ENCODE measurements at regions of chr1 and their contacts with region 1.

Region 1: DNA sequence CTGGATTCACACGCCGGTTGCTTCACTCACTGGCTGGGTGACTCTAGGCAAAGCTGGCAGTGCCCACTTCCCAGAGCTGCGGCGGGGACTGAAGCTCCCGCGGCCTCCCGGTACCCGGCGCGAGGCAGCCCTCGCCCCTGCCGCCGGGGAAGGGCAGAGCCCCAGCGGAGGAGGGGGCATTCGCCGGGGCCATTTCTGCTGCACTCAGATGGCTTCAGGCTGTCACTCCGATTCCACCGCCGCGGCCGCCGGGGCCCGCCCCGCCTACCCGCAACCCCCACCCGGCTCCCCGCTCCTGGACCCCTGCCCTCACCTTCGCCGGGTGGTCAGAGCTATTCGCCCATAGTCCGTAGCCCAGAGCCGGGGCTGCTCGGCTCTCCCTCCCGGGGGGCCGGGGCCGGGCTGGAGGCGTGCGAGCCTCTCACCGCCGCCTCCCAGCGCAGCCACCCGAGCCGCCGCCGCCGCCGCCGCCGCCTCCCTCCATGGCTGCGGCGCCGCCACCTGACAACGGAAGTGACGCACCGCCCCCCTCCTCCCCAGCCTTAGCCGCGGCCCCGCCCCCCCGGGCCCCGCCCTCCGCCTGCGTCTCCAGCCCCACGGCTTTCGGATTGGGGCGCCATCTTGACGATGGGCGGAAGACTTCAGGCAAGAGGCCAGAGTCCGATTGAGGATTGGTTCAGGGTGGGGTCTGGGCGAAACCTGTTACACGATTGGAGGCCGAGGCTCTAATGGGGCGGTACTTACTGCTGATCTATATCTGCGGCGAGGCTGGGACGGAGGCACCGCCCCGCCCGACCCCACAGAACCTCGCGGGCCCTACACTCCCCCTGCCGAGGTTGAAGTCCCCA is at the start of gene STK40:
- DNase-seq: peak; percentile 95
- H3K4me3 Mint-ChIP-seq: peak within 1 kb of the TSS; percentile 96
- H3K27ac Mint-ChIP-seq: peak within 1 kb of the TSS; percentile 97
- H3K4me1 Mint-ChIP-seq: peaks cover 54% of the 10 kb centered on the region
- H3K27me3 Mint-ChIP-seq: no peaks in the 10 kb centered on the region
- total RNA-seq, gene STK40: 46.5 and 48.7 TPM in 2 replicates

Region 2: DNA sequence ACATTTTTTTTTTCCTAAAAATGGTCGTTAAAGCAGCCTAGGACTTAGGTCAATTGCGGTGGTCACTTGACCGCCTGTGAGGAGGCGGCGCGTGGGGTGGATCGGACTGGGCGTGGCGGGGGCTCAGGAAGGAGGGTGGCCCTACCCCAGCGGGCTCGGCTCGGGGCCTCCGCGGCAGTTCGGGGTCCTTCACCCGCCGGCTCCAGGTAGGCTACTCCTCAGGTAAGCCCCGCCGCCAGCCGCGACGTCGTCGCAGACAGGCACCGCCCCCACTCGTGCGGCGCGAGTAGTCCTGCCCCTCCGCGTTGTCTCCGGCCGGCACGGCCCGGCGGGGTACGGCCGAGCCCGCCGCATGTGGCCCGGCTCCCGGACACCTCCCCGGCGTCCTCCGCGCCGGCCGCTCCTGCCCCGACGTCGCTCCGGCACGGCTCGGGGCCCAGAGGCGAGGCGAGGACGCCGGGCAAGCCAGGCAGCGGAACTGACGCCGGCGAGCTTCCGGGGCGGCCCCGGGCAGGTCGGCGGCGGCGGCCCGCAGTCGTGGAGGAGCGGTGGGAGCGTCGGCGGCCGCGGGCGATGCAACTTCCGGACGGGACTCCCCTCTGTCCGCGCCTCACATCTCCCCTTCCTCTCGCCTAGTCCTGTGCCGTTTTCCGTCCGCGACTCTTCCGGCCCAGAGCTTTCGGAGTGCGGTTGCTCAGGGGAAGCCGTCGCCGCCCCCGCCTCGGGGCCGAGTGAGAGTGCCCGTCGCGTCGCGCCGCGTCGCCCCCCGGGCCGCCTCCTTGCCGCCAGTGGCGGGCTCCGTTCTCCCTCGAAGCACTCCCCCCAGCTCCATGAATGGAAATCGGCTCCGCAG is 454.8 kb before region 1 on chr1 and contains the start of gene AGO3:
- intact Hi-C with region 1: loop called (anchors 10 kb)
- DNase-seq: peak; percentile 87
- H3K4me3 Mint-ChIP-seq: peak within 1 kb of the TSS; percentile 93
- H3K27ac Mint-ChIP-seq: peak within 1 kb of the TSS; percentile 97
- H3K4me1 Mint-ChIP-seq: peaks cover 36% of the 10 kb centered on the region
- H3K27me3 Mint-ChIP-seq: no peaks in the 10 kb centered on the region
- total RNA-seq, gene AGO3: 26.1 and 33.6 TPM in 2 replicates

Region 3: DNA sequence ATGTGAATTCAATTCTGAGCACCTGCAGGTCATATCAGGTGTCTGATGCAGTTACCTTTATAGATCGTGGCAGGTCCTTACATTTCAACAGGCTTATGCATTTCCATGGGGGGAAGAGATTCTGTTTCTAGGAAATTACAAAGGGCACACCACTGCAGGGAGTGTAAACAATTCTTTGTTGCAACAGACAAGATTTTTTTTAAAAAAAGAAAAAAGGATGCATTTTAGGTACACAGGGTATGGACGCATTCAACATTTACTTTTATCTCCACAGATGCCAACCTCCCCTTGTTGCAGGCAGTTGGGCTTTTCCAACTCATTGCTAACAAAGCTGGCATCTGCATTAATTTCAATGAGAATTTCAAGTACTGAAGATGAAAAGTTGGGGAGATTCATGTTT is 315.3 kb before region 1 on chr1:
- intact Hi-C with region 1: no loop called
- DNase-seq: no peak
- H3K4me3 Mint-ChIP-seq: no peak overlapping the region
- H3K27ac Mint-ChIP-seq: no peak overlapping the region
- H3K4me1 Mint-ChIP-seq: no peaks in the 10 kb centered on the region
- H3K27me3 Mint-ChIP-seq: no peaks in the 10 kb centered on the region

Region 4: GRCh38 chr1:36223993-36224536 is 161.6 kb before region 1 on chr1 and contains the start of gene THRAP3:
- intact Hi-C with region 1: loop called (anchors 1 kb)
- DNase-seq: peak; percentile 100
- H3K4me3 Mint-ChIP-seq: peak within 1 kb of the TSS; percentile 95
- H3K27ac Mint-ChIP-seq: peak within 1 kb of the TSS; percentile 100
- H3K4me1 Mint-ChIP-seq: peaks cover 36% of the 10 kb centered on the region
- H3K27me3 Mint-ChIP-seq: peaks cover 2% of the 10 kb centered on the region
- total RNA-seq, gene THRAP3: 147 and 154 TPM in 2 replicates

Region 5: DNA sequence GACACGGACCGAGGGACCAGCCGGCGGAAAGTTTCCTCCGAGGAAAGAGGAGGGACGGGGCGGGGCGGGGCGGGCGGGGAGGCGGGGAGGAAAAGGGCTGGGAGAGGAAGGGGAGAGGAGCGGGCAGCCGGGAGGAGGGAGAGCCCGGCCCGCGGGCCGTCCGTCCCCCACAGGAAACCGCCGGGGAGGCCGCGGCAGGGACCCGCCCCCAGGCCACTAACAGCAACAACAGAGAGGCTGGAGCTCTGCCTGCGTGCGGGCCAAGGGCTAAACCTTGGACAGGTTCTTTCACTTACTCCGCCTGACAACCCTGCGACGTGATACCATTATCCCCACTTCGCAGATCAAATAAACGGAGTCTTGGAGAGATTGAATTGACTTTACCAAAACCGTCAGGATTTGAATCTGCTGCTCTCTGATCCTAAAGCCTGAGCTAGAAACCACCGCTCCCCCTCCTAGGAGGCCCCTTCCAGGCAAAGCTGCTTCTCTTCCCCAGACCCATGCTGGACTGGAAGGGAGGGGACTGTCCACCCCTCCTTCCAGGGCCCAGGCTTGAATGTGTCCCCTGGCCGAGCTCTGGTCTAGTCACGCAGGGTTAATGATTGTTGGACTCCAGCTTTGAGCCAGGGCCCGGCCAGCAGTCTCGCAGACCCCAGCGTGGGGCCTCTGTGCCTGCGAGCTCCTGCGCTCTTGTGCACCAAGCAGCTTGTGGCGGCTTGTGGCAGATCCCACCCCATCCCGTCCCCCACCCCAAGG is 61.9 kb before region 1 on chr1 and contains the start of gene EVA1B:
- intact Hi-C with region 1: loop called (anchors 5 kb)
- DNase-seq: peak; percentile 60
- H3K4me3 Mint-ChIP-seq: peak within 1 kb of the TSS; percentile 80
- H3K27ac Mint-ChIP-seq: peak within 1 kb of the TSS; percentile 64
- H3K4me1 Mint-ChIP-seq: peaks cover 31% of the 10 kb centered on the region
- H3K27me3 Mint-ChIP-seq: peaks cover 6% of the 10 kb centered on the region
- total RNA-seq, gene EVA1B: 10.6 and 10.9 TPM in 2 replicates

Region 6: GRCh38 chr1:36397378-36398230 is 12.0 kb after region 1 on chr1 and contains the start of gene LSM10:
- intact Hi-C with region 1: loop called (anchors 1 kb)
- DNase-seq: peak; percentile 88
- H3K4me3 Mint-ChIP-seq: peak within 1 kb of the TSS; percentile 97
- H3K27ac Mint-ChIP-seq: peak within 1 kb of the TSS; percentile 98
- H3K4me1 Mint-ChIP-seq: peaks cover 29% of the 10 kb centered on the region
- H3K27me3 Mint-ChIP-seq: no peaks in the 10 kb centered on the region
- total RNA-seq, gene LSM10: 57.5 and 63.8 TPM in 2 replicates

Region 7: GRCh38 chr1:36420836-36421664 is 35.4 kb after region 1 on chr1:
- intact Hi-C with region 1: loop called (anchors 1 kb)
- DNase-seq: peak; percentile 81
- H3K4me3 Mint-ChIP-seq: no peak overlapping the region
- H3K27ac Mint-ChIP-seq: peak overlapping the region; percentile 48
- H3K4me1 Mint-ChIP-seq: peaks cover 14% of the 10 kb centered on the region
- H3K27me3 Mint-ChIP-seq: peaks cover 2% of the 10 kb centered on the region

Region 8: DNA sequence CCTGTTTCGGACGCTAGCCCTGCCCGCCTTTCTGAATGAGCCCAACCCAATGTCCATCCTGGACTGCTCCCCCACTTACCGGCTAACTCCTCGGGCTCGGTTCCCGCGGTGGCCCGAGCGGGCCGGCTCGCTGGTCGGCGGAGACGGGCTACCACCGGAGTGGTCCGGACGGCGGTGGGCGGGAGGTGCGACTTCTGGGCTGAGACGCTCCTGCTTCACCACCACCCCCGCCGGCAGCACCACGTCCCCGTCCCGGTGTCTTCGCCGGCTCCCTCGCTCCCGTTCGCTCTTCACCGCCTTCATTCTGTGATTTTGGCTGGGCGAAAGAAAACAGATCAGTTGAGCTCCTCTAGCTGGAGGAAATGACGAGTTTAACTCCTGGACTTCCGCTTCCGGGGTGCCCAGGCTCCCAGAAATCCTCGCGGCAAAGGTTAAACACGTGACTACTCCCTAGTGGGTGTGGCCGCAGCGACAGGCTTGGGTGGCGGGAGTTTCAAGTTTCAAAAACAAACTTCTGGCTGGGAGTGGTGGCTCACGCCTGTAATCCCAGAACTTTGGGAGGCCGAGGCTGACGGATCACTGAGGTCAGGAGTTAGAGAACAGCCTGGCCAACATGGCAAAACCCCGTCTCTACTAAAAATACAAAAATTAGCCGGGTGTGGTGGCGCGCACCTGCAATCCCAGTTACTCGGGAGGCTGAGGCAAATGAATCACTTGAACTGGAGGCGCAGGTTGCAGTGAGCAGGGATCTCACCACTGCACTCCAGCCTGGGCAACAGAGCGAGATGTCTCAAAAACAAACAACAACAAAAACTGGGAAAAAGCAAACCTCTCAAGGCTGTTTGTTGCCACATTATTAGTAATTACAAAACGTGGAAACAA is 1168.5 kb after region 1 on chr1 and contains the start of gene SNIP1:
- intact Hi-C with region 1: loop called (anchors 2 kb)
- DNase-seq: peak; percentile 89
- H3K4me3 Mint-ChIP-seq: peak within 1 kb of the TSS; percentile 98
- H3K27ac Mint-ChIP-seq: peak within 1 kb of the TSS; percentile 98
- H3K4me1 Mint-ChIP-seq: peaks cover 49% of the 10 kb centered on the region
- H3K27me3 Mint-ChIP-seq: no peaks in the 10 kb centered on the region
- total RNA-seq, gene SNIP1: 28.1 and 30.2 TPM in 2 replicates

Measured in activated T-helper 1 cell treated with anti-CD3 and anti-CD28 coated beads, Interleukin-12 subunit alpha, Interleukin-12 subunit beta, Interleukin-2, Interleukin-4 antibody, amounts not matched to agents 30 ng/mL and 10 ng/mL and 1 ng/mL, durations not matched to agents 14 hours and 24 hours and 36 hours (primary cell).